GM12878 (cell line): ENCODE measurements at regions of chr5 and their contacts with region 1.

Region 1: GRCh38 chr5:141878711-141879425 is 658 bp upstream of the PCDH1 start:
- DNase-seq: peak; percentile 71
- ATAC-seq: peak; percentile 89
- H3K4me3 ChIP-seq: peak overlapping the region; percentile 28; the same call in 1 of the 2 replicates
- H3K27ac ChIP-seq: no peak overlapping the region
- H3K4me1 ChIP-seq: peaks cover 37% of the 10 kb centered on the region
- H3K27me3 ChIP-seq: peaks cover 22 to 32% of the 10 kb centered on the region in 2 experiments
- CTCF ChIP-seq: peak; percentile 97 to 98 (median 97); a peak in 5 of 6 replicates
- EP300 ChIP-seq: no peak
- POLR2A ChIP-seq: no peak
- RAD21 ChIP-seq: peak; percentile 89

Region 2: GRCh38 chr5:141701360-141702119 is 177.3 kb before region 1 on chr5:
- CTCF ChIA-PET with region 1: interaction called, 83 read pairs
- POLR2A ChIA-PET with region 1: interaction called, 4 read pairs
- RAD21 ChIA-PET with region 1: interaction called, 67 read pairs
- SMC1A ChIA-PET with region 1: interaction called, 22 read pairs
- in situ Hi-C with region 1: no loop called
- intact Hi-C with region 1: loop called (anchors 1 kb)
- DNase-seq: peak; percentile 17
- ATAC-seq: peak; percentile 81
- H3K4me3 ChIP-seq: peak overlapping the region; percentile 50; the same call in 1 of the 2 replicates
- H3K27ac ChIP-seq: no peak overlapping the region
- H3K4me1 ChIP-seq: peaks cover 12% of the 10 kb centered on the region
- H3K27me3 ChIP-seq: peaks cover 5 to 13% of the 10 kb centered on the region in 2 experiments; a peak in 3 of 4 replicates
- CTCF ChIP-seq: no peak
- EP300 ChIP-seq: no peak
- POLR2A ChIP-seq: no peak
- RAD21 ChIP-seq: no peak

Region 3: DNA sequence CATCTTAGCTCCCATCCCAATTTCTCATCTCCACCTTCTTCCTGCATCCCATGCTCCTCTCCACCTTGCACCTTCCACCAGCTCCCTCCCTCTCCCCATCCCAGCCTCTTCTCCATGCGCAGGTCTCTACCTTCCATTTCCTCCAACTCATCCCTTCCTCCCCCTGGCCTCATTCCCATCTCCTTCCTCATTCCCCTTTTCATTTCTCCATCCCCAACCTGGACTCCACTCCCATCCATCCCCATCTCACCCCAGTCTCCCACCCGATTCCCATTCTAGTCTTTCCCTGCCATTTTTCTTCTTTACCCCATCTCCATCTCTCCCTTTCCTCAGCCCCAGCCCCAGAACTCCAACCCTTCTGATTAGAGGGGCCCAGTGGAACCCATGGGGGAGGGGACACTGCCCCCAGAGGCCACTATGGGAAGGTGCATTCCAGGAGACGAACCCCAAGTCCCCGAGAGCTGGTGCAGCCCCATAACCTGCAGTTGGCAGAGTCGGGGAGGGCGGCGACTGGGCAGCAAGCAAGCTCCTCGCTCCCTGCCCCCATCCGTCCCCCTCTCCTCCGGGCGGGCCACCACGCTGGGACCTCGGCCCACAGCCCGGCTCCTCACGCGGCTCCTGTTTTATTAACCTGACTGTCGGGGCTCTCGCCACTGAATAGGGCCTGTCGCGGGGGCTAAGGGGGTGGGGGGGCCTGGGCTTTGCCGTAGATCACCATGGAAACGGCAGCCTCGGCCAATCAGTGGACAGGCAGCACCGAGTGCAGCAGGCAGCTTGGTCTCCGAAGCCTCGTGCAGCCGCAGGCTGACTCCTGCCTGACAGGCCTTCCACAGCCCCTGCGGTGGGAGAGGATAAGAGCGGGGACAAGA is 67.3 kb before region 1 on chr5:
- CTCF ChIA-PET with region 1: interaction called, 8 read pairs
- POLR2A ChIA-PET with region 1: interaction called, 3 read pairs
- RAD21 ChIA-PET with region 1: interaction called, 5 read pairs
- SMC1A ChIA-PET with region 1: interaction called, 5 read pairs
- in situ Hi-C with region 1: no loop called
- intact Hi-C with region 1: loop called (anchors 5 kb)
- DNase-seq: no peak
- ATAC-seq: peak; percentile 89
- H3K4me3 ChIP-seq: no peak overlapping the region
- H3K27ac ChIP-seq: no peak overlapping the region
- H3K4me1 ChIP-seq: no peaks in the 10 kb centered on the region
- H3K27me3 ChIP-seq: peaks cover 3 to 4% of the 10 kb centered on the region in 2 experiments; a peak in 2 of 4 replicates
- CTCF ChIP-seq: peak; percentile 41 to 69 (median 69)
- EP300 ChIP-seq: no peak
- POLR2A ChIP-seq: no peak
- RAD21 ChIP-seq: peak; percentile 31

Region 4: DNA sequence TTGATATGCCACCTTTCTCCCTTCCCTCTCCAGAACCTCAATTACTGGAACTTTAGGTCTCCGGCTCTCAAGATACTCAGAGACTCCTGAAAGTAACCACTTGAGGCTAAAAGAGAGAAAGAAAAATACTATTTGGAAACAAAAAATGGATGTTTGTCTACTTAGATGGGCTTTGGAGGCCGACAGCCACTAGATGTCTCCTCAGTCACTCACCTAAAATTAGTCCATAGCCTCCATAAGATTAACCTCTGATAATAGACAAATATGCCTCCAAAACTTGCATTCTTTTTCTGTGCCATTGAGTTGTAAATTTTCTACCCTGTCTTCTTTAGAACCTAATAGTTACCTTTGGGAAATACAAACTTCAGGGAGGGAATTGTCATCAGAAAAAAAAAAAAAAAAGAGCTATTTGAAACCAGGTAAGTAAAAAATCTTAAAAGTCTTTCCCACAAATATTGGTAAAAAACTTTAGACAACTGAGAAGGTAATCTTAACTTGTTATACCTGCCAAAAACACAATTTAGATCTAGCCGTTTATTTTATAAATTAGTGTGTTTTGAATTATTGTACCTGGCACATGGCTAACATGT is 10.5 kb after region 1 on chr5:
- CTCF ChIA-PET with region 1: interaction called, 35 read pairs
- POLR2A ChIA-PET with region 1: no interaction called
- RAD21 ChIA-PET with region 1: interaction called, 8 read pairs
- SMC1A ChIA-PET with region 1: interaction called, 13 read pairs
- in situ Hi-C with region 1: no loop called
- intact Hi-C with region 1: no loop called
- DNase-seq: no peak
- ATAC-seq: peak; percentile 64
- H3K4me3 ChIP-seq: no peak overlapping the region
- H3K27ac ChIP-seq: no peak overlapping the region
- H3K4me1 ChIP-seq: no peaks in the 10 kb centered on the region
- H3K27me3 ChIP-seq: no peaks in the 10 kb centered on the region; a peak in 1 of 4 replicates
- CTCF ChIP-seq: peak; percentile 32 to 49 (median 33); a peak in 4 of 6 replicates
- EP300 ChIP-seq: no peak
- POLR2A ChIP-seq: no peak
- RAD21 ChIP-seq: peak; percentile 46

Region 5: DNA sequence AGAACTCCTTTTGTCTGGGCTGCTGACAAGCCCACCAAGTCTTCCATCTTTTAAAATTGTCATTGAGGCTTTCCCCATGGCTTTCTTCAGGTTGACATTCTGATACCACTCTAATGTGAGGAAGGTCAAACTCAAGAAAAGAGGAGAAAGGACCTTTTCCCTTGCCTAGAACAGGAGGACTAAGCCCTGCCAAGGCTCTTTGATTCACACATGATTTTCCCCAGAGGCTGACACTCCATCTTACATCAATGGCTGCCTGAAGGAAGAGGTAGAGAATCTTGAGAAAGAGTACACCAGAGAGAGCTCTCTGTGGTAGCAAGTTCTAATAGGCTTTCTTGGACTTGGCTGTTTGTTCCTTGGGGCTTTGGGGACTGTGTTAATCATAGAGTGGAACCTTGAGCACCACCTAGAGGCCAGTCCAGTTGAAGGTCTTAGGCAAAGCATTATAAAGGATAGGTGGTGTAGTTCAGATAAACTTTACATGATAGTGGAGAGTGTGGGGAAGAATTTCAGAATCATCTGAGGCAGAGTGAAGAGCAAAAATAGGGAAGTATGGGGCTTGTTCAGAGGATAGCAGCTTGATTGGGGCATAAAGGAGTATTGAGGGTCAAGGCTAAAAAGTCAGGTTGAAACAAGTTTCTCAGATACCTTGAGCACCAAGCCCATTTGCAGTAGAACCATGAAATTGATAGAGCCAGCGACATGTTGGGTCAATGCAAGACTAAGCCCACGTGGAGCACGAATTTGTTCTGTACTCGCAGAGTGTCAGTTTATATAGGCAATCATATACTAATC is 266.4 kb after region 1 on chr5:
- CTCF ChIA-PET with region 1: interaction called, 7 read pairs
- POLR2A ChIA-PET with region 1: no interaction called
- RAD21 ChIA-PET with region 1: interaction called, 6 read pairs
- SMC1A ChIA-PET with region 1: interaction called, 4 read pairs
- in situ Hi-C with region 1: no loop called
- intact Hi-C with region 1: loop called (anchors 10 kb)
- DNase-seq: peak; percentile 11
- ATAC-seq: peak; percentile 96
- H3K4me3 ChIP-seq: no peak overlapping the region
- H3K27ac ChIP-seq: no peak overlapping the region
- H3K4me1 ChIP-seq: no peaks in the 10 kb centered on the region
- H3K27me3 ChIP-seq: no peaks in the 10 kb centered on the region
- CTCF ChIP-seq: peak; percentile 66 to 79 (median 70)
- EP300 ChIP-seq: no peak
- POLR2A ChIP-seq: no peak
- RAD21 ChIP-seq: peak; percentile 54